PC-9 (cell line): ENCODE measurements at regions of chr1 and their contacts with region 1.

Region 1: GRCh38 chr1:176897350-176898236 is 266.9 kb downstream of the ASTN1 start:
- DNase-seq: peak; percentile 23 to 56
- H3K4me3 ChIP-seq: no peak overlapping the region
- H3K27ac ChIP-seq: no peak overlapping the region
- H3K4me1 ChIP-seq: no peaks in the 10 kb centered on the region
- H3K27me3 ChIP-seq: peaks cover 18% of the 10 kb centered on the region
- CTCF ChIP-seq: peak; percentile 92

Region 2: GRCh38 chr1:176754676-176755075 is 142.9 kb before region 1 on chr1:
- CTCF ChIA-PET with region 1: no interaction called
- POLR2A ChIA-PET with region 1: no interaction called
- intact Hi-C with region 1: no loop called
- DNase-seq: no peak
- H3K4me3 ChIP-seq: no peak overlapping the region
- H3K27ac ChIP-seq: no peak overlapping the region
- H3K4me1 ChIP-seq: no peaks in the 10 kb centered on the region
- H3K27me3 ChIP-seq: no peaks in the 10 kb centered on the region
- CTCF ChIP-seq: no peak

Region 3: DNA sequence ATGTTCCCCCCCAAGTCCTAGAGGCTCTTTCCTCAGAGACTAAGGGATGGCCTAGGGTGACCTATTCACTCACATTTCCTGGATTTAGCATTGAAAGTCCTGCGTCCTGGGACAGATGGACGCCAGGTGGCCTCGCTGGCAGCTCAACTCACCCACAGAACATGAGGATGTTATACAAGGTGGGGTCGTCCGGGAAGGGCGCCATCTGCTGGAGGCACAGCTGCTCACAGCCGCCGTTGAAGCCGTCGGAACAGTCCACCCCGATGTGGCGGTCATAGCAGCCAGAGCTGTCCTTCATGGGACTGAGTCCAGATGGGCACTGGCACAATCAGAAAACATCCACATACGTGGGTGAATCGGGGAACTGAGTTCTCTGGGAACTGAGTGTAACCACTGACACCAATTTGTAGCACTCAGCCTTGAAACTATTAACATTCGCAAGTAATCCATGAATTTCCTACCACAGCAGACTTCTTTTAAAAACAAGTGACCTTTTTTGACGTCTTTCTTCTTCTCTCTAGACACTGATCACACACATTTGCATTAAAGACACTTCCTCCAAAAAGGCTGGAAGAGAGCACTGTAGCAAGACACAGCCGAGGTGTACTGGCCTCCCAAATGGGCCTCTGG is 51.6 kb after region 1 on chr1:
- CTCF ChIA-PET with region 1: no interaction called
- POLR2A ChIA-PET with region 1: no interaction called
- intact Hi-C with region 1: loop called (anchors 1 kb)
- DNase-seq: peak; percentile 38 to 44
- H3K4me3 ChIP-seq: no peak overlapping the region
- H3K27ac ChIP-seq: no peak overlapping the region
- H3K4me1 ChIP-seq: no peaks in the 10 kb centered on the region
- H3K27me3 ChIP-seq: no peaks in the 10 kb centered on the region
- CTCF ChIP-seq: peak; percentile 55

Region 4: DNA sequence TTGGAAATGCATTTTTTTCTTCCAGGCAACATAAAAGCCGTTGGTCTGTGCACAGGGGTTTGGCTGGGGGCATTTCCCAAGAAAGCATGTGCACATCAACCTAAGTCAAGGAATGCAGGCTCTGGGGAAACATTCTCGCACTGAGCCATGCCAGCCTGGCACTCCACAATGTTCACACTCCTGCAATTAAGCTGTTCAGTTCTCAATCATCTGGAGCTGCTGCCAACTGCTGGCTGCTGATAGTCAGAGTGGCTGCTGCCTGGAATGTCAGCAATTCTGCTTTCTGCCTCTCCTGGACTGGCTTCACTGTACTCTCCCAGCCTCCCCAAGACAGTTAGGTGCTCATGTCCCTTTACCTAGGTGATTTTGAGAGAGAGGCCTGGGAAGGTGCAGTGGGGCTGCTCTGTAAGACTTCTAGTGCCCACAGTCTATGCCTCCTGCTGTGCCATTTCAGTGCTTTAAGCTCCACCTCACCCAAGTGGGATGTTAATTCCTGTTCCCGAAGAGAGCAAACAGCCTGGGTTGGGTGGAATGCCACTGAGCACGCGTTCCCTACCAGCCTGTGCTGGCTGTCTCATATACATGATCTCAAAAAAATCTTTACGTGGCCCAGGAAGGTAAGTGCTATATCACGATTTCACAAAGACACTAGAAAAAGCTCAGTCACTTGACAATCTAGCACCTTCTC is 404.9 kb after region 1 on chr1:
- CTCF ChIA-PET with region 1: no interaction called
- POLR2A ChIA-PET with region 1: no interaction called
- intact Hi-C with region 1: no loop called
- DNase-seq: no peak
- H3K4me3 ChIP-seq: no peak overlapping the region
- H3K27ac ChIP-seq: no peak overlapping the region
- H3K4me1 ChIP-seq: no peaks in the 10 kb centered on the region
- H3K27me3 ChIP-seq: no peaks in the 10 kb centered on the region
- CTCF ChIP-seq: no peak

Region 5: DNA sequence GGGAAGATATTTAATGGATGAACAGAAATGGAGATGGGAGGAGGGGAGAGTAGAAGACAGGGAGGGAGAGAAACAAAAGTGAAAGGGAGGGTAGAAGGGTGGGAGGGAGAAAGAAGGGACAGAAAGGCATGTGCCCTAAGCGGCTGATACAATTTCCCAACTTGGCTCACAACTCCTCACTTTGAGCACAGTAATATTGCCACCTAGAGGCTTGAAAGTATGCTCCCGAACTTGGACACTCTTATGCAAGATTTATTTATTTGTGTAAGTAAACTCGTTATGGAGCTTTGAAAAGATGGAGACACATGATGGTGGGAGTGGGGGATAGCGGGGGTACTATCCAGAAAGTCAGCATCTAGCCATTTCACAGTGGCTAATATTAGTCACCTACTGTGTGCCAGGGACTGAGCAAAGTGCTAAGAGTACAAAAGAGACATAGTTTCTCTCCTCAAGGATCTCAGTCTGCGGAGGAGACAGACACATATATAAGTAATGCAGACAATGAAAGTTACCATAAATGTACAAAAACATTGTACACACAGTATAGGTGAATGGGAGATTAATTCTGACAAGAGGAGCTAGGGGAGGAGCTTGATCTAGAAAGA is 882.6 kb after region 1 on chr1:
- CTCF ChIA-PET with region 1: no interaction called
- POLR2A ChIA-PET with region 1: no interaction called
- intact Hi-C with region 1: loop called (anchors 5 kb)
- DNase-seq: peak in 1 of 2 experiments; percentile 47
- H3K4me3 ChIP-seq: no peak overlapping the region
- H3K27ac ChIP-seq: no peak overlapping the region
- H3K4me1 ChIP-seq: no peaks in the 10 kb centered on the region
- H3K27me3 ChIP-seq: peaks cover 14% of the 10 kb centered on the region; the same call in 1 of the 2 replicates
- CTCF ChIP-seq: peak; percentile 67